Activated T-helper 2 cell treated with anti-CD3 and anti-CD28 coated beads, Interferon-gamma antibody, Interleukin-2, Interleukin-4, amounts not matched to agents 10 μg/mL and 5 μg/mL and 100 μg/mL, durations not matched to agents 14 hours and 24 hours and 36 hours (primary cell): ENCODE measurements at regions of chr17 and their contacts with region 1.

Region 1: DNA sequence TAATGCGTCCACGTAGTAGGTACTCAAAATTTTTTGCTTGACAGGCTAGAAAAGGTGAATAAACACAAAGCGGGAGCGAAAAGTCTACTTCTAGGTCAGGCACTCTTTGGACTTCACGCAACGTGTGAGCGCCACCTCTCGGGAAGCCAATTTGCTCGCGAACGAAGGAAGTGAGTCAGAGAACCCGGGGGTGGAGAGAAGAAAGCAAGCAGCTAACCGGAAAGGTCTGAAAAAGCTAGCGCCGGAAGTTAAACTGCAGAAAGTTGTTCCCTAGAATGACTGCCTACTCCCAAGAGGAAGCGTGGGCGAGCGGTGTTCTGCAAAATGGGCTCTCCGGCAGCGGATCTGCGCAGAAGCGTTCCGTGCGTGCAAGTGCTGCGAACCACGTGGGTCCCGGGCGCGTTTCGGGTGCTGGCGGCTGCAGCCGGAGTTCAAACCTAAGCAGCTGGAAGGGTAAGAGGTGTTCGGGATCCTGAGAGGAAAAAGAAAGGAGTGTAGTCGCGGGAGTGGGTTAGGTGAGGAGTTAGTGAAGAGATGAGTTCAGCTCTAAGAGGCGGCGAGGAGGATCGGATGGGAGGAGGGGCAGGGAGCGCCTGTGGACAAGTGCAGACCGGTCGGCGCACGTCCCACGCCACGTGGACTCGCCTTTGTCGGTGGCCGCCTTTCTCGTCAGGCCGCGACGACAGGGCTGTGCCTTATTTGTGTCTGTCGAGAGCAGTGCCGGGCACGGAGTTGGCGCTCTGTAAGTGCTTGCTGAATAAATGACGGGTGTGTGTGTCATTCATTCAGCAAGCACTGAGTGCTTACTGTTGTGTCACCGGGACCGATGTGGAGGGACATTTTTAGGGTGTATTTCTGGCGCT is at the start of gene NME1:
- DNase-seq: peak; percentile 99
- H3K4me3 Mint-ChIP-seq: no peak within 1 kb of the TSS
- H3K27ac Mint-ChIP-seq: no peak within 1 kb of the TSS
- H3K4me1 Mint-ChIP-seq: peaks cover 19% of the 10 kb centered on the region
- H3K27me3 Mint-ChIP-seq: no peaks in the 10 kb centered on the region
- total RNA-seq, gene NME1: 360 and 373 TPM in 2 replicates

Region 2: DNA sequence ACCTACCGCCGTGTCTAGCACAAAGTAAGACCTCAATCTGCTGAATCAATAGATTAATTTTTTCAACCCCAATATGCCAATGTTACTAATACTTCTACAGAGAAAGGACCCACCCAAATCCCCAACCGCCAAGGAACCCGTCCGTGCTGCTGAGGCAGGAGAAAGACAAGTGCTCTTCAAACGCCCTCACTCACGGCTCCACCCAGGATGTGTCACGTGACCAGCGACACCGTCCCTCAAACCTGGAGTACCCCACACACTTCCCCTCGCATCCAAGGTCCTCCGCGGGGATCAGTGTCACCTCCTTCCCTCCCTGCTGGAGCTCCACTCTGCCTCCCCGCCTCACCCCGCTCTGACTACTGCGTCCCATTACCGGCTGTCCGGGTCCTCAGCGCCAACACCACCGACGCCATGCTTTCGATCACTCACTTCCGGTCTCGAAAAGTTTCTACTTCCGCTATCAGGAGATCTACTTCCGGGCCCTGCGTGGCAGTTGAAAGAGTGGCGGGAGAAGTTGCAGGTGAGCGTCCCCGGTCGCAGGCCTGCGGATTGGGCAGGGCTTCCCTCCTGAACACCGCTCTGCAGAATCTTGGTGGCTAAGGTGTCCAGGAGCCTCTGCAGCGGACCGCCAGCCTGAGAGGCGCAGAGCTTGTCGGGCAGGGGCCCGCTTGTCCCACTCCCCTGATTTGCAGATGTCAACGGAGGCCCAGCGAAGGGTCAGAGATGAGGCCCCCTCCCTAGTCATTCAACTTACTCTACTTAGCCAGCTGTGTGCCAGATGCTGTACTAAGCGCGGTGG is 780.5 kb before region 1 on chr17 and contains the starts of genes EME1 and MRPL27:
- intact Hi-C with region 1: loop called (anchors 10 kb)
- DNase-seq: peak; percentile 85
- H3K4me3 Mint-ChIP-seq: peak within 1 kb of the TSS; percentile 96
- H3K27ac Mint-ChIP-seq: peak within 1 kb of the TSS; percentile 99
- H3K4me1 Mint-ChIP-seq: peaks cover 21% of the 10 kb centered on the region
- H3K27me3 Mint-ChIP-seq: no peaks in the 10 kb centered on the region
- total RNA-seq, gene EME1: 26.8 and 28.6 TPM in 2 replicates
- total RNA-seq, gene MRPL27: 95.2 and 95.6 TPM in 2 replicates

Region 3: DNA sequence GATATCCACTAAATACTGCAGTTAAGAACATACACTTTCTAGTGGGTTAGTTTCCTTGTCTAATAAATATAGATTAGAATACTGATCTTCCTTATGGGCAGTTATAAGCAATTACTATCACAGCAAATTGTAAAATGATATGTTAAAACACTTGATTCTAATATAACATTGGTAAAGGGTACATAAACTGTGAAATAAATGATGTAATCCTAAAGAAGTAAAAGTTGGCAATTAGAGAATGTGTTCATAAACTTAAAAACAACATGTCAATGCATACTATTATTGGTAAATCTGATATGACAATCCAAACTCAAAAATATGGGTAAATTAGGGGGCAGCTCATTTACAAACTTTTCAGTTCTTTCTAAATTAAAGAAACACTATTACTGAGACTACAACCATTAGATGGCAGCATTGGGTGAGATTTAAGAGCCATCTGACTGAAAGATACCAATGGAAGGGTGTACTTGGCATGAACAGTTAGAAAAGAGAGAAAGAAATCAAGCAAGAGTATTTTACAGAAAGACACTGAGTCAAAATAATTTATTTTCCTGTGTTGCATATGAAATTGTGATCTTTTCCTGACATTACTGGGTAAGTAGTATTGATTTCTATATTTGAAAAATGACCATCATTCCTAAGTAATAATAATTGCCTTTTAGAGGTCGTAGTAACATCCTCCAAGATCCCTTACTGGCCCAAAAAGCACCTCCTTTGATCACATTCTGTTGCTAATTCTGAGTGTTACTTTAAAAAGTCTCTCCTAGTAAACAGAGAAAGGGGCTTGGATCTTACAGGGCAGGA is 152.4 kb before region 1 on chr17:
- intact Hi-C with region 1: loop called (anchors 1 kb)
- DNase-seq: no peak
- H3K4me3 Mint-ChIP-seq: no peak overlapping the region
- H3K27ac Mint-ChIP-seq: no peak overlapping the region
- H3K4me1 Mint-ChIP-seq: peaks cover 4% of the 10 kb centered on the region
- H3K27me3 Mint-ChIP-seq: no peaks in the 10 kb centered on the region

Region 4: DNA sequence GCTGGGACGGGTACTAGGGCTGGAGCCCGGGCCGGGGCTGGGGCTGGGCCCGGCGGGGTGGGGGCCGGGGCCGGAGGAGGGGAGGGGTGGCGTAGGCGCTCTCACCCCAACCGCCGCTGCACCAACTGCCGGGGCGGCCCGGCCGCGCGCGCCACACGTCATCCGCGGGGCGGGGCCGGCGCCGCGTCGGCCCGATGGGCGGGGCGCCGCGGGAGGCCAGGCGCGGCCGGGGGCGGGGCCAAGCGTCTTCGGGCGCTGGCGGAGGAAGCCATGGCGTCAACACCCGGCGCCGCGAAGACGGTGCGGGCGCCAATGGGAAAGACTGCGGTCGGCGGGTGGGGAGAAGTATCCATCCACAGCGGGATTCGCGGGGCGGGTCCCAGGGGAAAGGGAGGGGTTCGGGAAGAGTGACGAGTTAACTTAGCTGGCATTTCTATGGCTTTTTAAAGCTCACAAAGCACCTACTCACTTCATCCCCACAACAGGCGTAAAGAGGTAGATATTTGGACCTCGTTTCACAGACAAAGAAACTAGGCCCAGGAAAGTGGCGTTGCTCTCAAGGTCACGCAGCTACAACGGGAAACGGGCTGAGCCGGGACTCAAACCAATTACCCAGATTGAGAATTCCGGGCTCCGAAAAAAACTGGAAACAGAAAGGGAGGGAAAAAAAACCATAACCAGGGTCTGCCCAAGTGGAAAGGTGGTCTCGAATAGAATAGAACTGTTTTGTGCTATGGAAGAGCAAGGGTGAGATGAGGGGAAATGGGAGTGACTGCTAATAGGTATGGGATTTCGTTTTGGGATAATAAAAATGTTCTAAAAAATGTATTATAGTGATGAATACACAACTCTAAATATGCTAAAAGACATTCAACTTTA is 32.5 kb before region 1 on chr17 and contains the start of gene SPAG9:
- intact Hi-C with region 1: loop called (anchors 1 kb)
- DNase-seq: peak; percentile 93
- H3K4me3 Mint-ChIP-seq: peak within 1 kb of the TSS; percentile 93
- H3K27ac Mint-ChIP-seq: peak within 1 kb of the TSS; percentile 99
- H3K4me1 Mint-ChIP-seq: peaks cover 44% of the 10 kb centered on the region
- H3K27me3 Mint-ChIP-seq: no peaks in the 10 kb centered on the region
- total RNA-seq, gene SPAG9: 48.1 and 48.3 TPM in 2 replicates

Region 5: DNA sequence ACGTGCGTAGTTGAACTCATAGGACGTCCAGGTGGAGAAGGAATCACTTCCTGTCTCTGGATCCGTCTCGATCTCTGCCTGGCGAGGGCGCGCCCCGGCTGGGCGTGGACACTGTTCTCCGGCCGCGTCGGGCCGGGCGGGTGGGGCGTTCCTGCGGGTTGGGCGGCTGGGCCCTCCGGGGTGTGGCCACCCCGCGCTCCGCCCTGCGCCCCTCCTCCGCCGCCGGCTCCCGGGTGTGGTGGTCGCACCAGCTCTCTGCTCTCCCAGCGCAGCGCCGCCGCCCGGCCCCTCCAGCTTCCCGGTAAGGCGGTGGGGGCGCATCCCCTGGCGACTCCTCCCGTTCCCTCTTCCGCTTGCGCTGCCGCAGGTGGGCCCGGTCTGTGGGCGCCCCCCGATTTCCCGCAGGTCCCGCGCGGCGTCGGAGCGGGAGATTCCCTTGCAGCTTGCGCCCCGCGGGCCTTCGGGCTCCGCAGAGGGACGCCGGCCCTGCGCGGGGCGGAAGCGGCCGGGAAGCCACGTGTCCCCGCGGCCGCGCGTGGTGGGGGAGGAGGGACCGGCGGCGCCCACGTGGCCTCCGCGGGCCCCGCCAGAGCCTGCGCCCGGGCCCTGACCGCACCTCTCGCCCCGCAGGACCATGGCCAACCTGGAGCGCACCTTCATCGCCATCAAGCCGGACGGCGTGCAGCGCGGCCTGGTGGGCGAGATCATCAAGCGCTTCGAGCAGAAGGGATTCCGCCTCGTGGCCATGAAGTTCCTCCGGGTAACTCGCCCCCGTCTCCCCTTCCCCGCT is 13.0 kb after region 1 on chr17 and contains the start of gene NME2:
- intact Hi-C with region 1: loop called (anchors 1 kb)
- DNase-seq: peak; percentile 68
- H3K4me3 Mint-ChIP-seq: peak within 1 kb of the TSS; percentile 89
- H3K27ac Mint-ChIP-seq: peak within 1 kb of the TSS; percentile 90
- H3K4me1 Mint-ChIP-seq: peaks cover 26% of the 10 kb centered on the region
- H3K27me3 Mint-ChIP-seq: no peaks in the 10 kb centered on the region
- total RNA-seq, gene NME2: 708 and 735 TPM in 2 replicates

Region 6: GRCh38 chr17:51260125-51260880 is 106.9 kb after region 1 on chr17 and contains the start of gene UTP18:
- intact Hi-C with region 1: loop called (anchors 1 kb)
- DNase-seq: peak; percentile 94
- H3K4me3 Mint-ChIP-seq: peak within 1 kb of the TSS; percentile 88
- H3K27ac Mint-ChIP-seq: peak within 1 kb of the TSS; percentile 97
- H3K4me1 Mint-ChIP-seq: peaks cover 49% of the 10 kb centered on the region
- H3K27me3 Mint-ChIP-seq: no peaks in the 10 kb centered on the region
- total RNA-seq, gene UTP18: 75.7 and 78.7 TPM in 2 replicates